GM12878 (cell line): ENCODE measurements at regions of chr19 and their contacts with region 1.

Region 1: DNA sequence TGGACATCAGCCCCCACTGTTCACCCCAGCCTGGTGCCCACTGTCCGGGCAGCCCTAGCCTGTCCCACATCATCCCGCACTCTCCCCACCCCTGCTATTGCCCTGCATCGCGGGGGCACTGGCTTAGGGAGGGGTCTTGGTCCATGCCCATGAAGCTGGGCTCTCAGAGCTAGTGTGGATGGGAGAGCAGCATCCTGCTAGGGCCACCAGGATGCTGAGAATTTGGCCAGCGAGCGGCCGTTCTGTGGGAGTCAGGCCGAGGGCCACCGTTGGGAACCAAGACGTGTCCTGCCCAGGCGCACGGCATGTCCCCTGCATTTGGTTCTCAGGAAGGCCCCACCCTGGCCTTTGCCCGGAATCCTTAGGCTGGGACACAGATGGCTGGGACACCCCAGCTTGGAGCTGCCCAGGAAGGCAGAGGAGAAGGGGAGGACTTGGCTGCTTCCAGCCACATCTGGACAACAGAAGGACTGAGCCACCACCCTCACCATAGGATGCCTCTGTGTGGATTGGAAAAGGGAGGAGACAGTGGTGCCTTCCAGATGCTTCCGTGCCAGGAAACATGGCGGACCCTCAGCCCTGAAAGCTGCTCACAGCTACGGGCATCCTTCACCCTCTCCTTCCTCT is 14.6 kb downstream of the ADGRE5 start:
- DNase-seq: no peak
- ATAC-seq: peak; percentile 10
- H3K4me3 ChIP-seq: no peak overlapping the region
- H3K27ac ChIP-seq: no peak overlapping the region
- H3K4me1 ChIP-seq: peaks cover under 1% of the 10 kb centered on the region; the same call in 1 of the 2 replicates
- H3K27me3 ChIP-seq: no peaks in the 10 kb centered on the region
- CTCF ChIP-seq: no peak
- EP300 ChIP-seq: no peak
- POLR2A ChIP-seq: peak; percentile 57; the same call in 1 of the 2 replicates
- RAD21 ChIP-seq: no peak

Region 2: DNA sequence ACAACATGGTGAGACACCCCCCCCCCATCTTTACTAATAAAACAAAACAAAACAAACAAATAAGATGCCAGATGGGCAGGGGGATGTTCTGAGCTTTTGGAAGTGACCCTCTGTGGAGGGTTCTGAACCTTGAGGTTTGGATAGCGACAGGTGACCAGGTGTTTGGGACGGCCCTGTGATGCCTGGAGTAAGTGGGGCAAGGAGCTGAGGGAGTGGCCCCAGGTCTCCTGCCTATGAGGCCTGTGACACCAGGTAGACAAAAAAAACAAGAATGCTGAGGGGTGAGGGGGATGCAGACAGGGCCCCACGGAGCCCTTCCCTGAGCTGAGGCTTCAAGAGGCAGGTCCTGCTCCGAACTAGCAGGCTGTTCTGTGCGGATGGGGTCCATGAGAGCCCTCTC is 373.4 kb after region 1 on chr19:
- CTCF ChIA-PET with region 1: no interaction called
- POLR2A ChIA-PET with region 1: no interaction called
- RAD21 ChIA-PET with region 1: no interaction called
- SMC1A ChIA-PET with region 1: no interaction called
- in situ Hi-C with region 1: loop called (anchors 5 kb)
- intact Hi-C with region 1: no loop called
- DNase-seq: no peak
- ATAC-seq: no peak
- H3K4me3 ChIP-seq: no peak overlapping the region
- H3K27ac ChIP-seq: no peak overlapping the region
- H3K4me1 ChIP-seq: no peaks in the 10 kb centered on the region
- H3K27me3 ChIP-seq: no peaks in the 10 kb centered on the region
- CTCF ChIP-seq: no peak
- EP300 ChIP-seq: no peak
- POLR2A ChIP-seq: no peak
- RAD21 ChIP-seq: no peak